ENCODE measurements at regions of chr14 and their contacts with region 1.

Region 1: DNA sequence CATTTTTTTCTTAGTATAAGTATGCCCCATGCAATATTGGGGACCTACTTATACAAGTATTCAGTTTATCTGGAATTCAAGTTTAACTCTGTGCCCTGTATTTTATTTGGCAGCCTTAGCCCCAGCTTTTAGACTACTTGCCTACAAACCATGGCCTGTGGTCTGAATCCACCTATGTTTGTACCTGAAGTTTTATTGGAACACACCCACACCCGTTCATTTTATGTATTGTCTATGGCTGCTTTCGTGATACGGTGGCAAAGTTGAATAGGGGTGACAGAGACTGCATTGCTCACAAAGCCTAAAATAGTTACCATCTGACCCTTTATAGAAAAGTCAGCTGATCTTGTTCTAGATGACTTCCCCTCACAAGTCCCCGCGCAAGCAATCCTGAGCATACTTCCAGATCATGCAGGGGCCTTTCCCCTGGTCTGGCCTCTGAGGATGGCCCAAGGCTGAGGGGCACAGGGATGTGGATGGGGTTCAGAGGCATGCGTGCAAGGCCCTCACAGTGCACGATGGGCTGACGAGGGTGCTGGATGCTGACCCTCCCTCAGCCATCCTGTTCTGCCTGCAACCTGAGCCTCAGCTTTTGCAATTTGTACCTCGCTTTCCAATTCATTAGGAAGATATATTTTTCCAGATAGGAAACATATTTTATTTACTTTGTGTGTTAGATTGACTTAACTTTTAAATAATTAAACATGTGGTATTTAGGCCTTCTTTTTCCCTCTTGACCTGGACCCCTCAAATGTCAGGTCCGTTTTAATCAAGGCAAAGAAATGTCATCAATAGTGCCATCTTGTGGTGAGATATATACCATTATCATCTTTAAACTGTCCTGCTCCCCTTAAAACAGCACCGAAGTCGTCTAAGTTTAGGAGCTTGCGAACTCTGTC is 527.3 kb upstream of the CCDC196 start:
- H3K4me3 ChIP-seq: no peak overlapping the region
- H3K27ac ChIP-seq: no peak overlapping the region
- H3K4me1 ChIP-seq: no peaks in the 10 kb centered on the region
- CTCF ChIP-seq: no peak

Region 2: GRCh38 chr14:65164068-65164824 is 794.7 kb before region 1 on chr14:
- CTCF ChIA-PET with region 1: interaction called, 24 read pairs
- POLR2A ChIA-PET with region 1: no interaction called
- H3K4me3 ChIP-seq: no peak overlapping the region
- H3K27ac ChIP-seq: no peak overlapping the region
- H3K4me1 ChIP-seq: no peaks in the 10 kb centered on the region
- CTCF ChIP-seq: no peak

Region 3: GRCh38 chr14:65412032-65412846 is 546.7 kb before region 1 on chr14 and contains the start of gene FUT8:
- CTCF ChIA-PET with region 1: interaction called, 33 read pairs
- POLR2A ChIA-PET with region 1: no interaction called
- H3K4me3 ChIP-seq: peak within 1 kb of the TSS; percentile 96
- H3K27ac ChIP-seq: peak within 1 kb of the TSS; percentile 96
- H3K4me1 ChIP-seq: 0 out of 2 replicates have a peak, but pooled peaks cover 2% of the 10 kb centered on the region
- CTCF ChIP-seq: peak; percentile 98

Region 4: DNA sequence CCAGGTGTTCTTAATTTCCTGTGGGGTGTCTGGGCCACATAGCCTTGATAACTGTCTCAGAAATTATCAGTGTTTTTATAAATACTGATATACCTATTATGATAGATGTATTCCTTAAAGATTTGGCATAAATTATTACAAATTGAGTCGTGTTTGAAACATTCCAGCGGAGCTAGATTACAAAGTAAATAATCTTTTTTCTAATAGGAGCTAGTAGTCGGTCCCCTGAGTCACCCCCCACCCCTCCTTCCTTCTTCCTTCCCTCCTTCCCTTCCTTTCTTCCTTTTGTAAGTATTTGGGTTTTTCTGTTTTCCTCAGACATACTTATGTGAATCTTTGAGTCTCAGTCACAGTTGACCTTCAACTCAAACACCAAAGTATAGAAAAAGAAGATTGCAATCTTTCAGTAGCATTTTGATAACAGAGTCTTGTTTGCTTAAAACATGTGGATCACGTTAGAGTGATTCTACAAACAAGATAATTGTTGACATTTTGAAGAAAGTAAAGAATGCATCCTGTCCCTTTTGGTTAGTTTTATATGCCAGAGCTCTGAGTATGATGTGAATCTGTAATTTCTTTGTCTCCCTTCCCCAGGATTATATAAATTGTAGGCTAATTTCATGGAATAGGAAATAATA is 282.4 kb before region 1 on chr14:
- CTCF ChIA-PET with region 1: no interaction called
- POLR2A ChIA-PET with region 1: no interaction called
- H3K4me3 ChIP-seq: no peak overlapping the region
- H3K27ac ChIP-seq: no peak overlapping the region
- H3K4me1 ChIP-seq: no peaks in the 10 kb centered on the region
- CTCF ChIP-seq: no peak

Region 5: GRCh38 chr14:65940056-65940733 is 18.7 kb before region 1 on chr14:
- CTCF ChIA-PET with region 1: interaction called, 62 read pairs
- POLR2A ChIA-PET with region 1: no interaction called
- H3K4me3 ChIP-seq: no peak overlapping the region
- H3K27ac ChIP-seq: no peak overlapping the region
- H3K4me1 ChIP-seq: no peaks in the 10 kb centered on the region; the same call in 1 of the 2 replicates
- CTCF ChIP-seq: no peak

Region 6: GRCh38 chr14:65976761-65977404 is 18.0 kb after region 1 on chr14:
- CTCF ChIA-PET with region 1: interaction called, 16 read pairs
- POLR2A ChIA-PET with region 1: no interaction called
- H3K4me3 ChIP-seq: no peak overlapping the region
- H3K27ac ChIP-seq: no peak overlapping the region
- H3K4me1 ChIP-seq: peaks cover 4% of the 10 kb centered on the region; the same call in 1 of the 2 replicates
- CTCF ChIP-seq: no peak

Region 7: DNA sequence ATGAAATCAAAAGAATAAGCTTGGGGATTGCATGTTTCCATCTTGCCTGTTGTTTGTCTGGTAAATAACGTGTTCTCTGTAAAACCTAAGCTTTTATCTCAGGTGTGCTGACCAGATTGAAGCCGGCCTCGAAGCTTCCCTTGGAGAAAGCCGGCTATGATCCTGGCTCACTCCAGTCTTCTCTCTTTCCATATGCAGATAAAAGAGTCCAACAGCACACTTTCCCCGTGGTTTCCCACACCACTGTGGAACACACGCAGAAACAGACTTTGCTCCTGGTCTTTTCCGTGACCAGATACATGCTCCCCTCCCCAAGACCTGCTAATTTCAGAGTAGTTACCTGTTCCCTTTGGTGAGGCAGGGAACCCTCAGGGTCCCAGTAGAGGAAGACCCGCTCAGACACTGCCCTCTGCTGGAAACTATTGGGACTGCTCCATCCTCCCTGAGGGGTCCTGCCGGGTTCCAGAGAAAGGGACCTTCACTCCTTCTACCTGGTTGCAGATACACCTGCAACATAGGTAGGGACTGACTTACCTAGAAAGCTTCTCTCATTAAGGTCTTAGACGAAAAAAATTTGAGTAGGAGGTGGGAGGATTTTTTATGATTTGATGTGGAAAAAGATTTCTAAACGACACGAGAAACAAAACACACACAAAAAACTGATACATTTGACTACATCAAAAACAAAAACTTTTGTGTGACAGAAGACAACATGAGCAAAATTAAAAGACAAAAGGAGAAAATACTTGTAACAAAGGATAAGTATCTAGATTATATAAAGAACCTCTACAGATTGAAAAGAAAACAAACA is 111.8 kb after region 1 on chr14:
- CTCF ChIA-PET with region 1: interaction called, 20 read pairs
- POLR2A ChIA-PET with region 1: no interaction called
- H3K4me3 ChIP-seq: no peak overlapping the region
- H3K27ac ChIP-seq: no peak overlapping the region
- H3K4me1 ChIP-seq: no peaks in the 10 kb centered on the region
- CTCF ChIP-seq: no peak

Measured in HEK293 (cell line).